ENCODE measurements at regions of chr18 and their contacts with region 1.

Region 1: GRCh38 chr18:5619376-5619775 is 75.6 kb upstream of the EPB41L3 start:
- DNase-seq: no peak
- H3K4me3 ChIP-seq: no peak overlapping the region
- H3K27ac ChIP-seq: no peak overlapping the region
- H3K4me1 ChIP-seq: no peaks in the 10 kb centered on the region
- H3K27me3 ChIP-seq: peaks cover 0 to 3% of the 10 kb centered on the region in 2 donors
- CTCF ChIP-seq: no peak
- POLR2A ChIP-seq: no peak

Region 2: DNA sequence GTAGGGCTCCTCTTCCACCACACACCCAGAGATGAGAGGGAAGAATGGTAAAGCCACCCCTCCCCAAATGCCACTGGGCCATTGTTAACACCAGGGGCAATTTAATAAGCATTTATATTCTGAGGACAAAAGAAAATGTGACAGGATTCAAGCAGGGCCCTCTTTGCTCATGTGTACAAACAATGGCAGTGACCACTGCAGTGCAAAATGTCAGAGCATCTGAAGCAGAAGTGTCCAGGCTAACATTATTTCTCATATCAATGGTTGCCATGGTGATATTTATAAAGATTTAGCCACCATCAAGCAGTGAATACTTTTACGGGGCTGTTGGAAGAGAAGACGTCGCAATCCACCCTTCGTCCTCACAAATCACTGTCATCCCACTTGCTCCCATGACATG is 64.7 kb before region 1 on chr18:
- intact Hi-C with region 1: loop called (anchors 2 kb)
- DNase-seq: no peak
- H3K4me3 ChIP-seq: no peak overlapping the region
- H3K27ac ChIP-seq: no peak overlapping the region
- H3K4me1 ChIP-seq: no peaks in the 10 kb centered on the region
- H3K27me3 ChIP-seq: no peaks in the 10 kb centered on the region
- CTCF ChIP-seq: no peak
- POLR2A ChIP-seq: no peak